Activated naive CD4-positive, alpha-beta T cell treated with anti-CD3 and anti-CD28 coated beads for 36 hours (primary cell): ENCODE measurements at regions of chr10 and their contacts with region 1.

Region 1: DNA sequence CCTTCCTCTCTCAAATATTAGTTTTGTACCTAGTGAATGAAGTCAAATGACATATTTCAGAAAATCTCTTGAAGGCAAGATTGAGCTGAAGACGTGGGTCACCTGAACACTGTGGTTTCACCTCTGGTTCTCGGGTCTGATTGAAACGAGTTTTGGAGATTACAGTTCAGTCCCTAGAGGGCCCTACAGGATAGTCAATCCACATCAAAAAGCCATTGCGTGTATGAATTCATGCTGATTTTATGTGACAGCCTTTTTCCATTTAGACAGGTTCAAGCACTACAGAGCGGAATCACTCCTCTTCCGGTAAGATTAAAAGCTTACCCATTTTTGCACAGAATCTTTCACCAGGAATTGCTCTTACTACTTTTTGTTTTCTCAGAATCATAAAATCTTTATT is 62.2 kb downstream of the VIM start:
- DNase-seq: peak; percentile 55
- H3K4me3 Mint-ChIP-seq: no peak overlapping the region
- H3K27ac Mint-ChIP-seq: peak overlapping the region; percentile 68
- H3K4me1 Mint-ChIP-seq: peaks cover 12% of the 10 kb centered on the region
- H3K27me3 Mint-ChIP-seq: peaks cover 18% of the 10 kb centered on the region

Region 2: GRCh38 chr10:17375936-17376584 is 85.8 kb after region 1 on chr10:
- CTCF ChIA-PET with region 1: interaction called, 17 read pairs
- intact Hi-C with region 1: loop called (anchors 1 kb)
- DNase-seq: peak; percentile 48
- H3K4me3 Mint-ChIP-seq: no peak overlapping the region
- H3K27ac Mint-ChIP-seq: no peak overlapping the region
- H3K4me1 Mint-ChIP-seq: no peaks in the 10 kb centered on the region
- H3K27me3 Mint-ChIP-seq: peaks cover 4% of the 10 kb centered on the region

Region 3: GRCh38 chr10:17474595-17475323 is 184.5 kb after region 1 on chr10:
- CTCF ChIA-PET with region 1: interaction called, 6 read pairs
- intact Hi-C with region 1: loop called (anchors 1 kb)
- DNase-seq: no peak
- H3K4me3 Mint-ChIP-seq: no peak overlapping the region
- H3K27ac Mint-ChIP-seq: no peak overlapping the region
- H3K4me1 Mint-ChIP-seq: peaks cover 5% of the 10 kb centered on the region
- H3K27me3 Mint-ChIP-seq: peaks cover 7% of the 10 kb centered on the region

Region 4: DNA sequence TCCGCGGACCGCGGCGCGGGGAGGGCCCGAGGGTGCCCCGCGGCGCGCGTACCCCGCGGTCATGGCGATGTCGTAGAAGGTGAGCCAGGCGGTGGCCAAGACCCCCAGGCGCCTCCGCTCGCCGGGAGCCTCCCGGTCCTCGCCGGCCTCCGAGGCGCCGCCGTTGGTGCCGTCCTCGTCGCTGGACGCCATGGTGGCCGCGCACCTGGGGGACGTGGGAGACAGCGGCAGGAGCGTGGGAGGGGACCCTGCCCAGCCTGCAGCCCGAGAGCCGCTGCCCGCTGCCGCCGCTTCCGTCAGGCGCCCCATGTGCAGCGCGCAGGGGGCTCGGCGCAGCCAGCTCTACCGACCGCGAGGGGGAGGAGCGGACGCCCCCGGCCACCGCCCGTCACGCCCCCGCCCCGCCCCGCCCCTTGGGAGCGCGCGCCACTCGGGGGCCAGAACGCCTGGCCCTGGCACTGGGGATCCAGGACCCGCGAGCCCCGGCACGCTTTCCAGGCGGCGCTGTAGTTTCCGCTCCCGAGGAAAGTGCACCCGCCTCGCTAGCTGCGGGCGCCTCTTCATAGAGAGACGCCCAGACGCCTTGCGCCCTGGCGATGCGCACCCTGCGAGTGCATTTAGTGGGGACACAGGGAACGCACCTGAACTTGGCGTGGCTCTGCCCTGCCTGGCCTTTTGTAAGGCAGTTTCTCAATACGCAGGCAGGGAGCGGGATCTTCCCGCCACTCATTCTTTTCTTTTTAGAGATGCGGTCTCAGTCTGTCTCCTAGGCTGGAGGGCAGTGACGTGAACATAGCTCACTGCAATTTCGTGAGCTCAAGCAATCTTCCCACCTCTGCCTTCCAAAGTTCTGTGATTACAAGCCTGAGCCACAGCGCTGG is 327.0 kb after region 1 on chr10 and contains the start of gene HACD1:
- CTCF ChIA-PET with region 1: no interaction called
- intact Hi-C with region 1: loop called (anchors 5 kb)
- DNase-seq: peak; percentile 64
- H3K4me3 Mint-ChIP-seq: peak within 1 kb of the TSS; percentile 82
- H3K27ac Mint-ChIP-seq: no peak within 1 kb of the TSS
- H3K4me1 Mint-ChIP-seq: peaks cover 3% of the 10 kb centered on the region
- H3K27me3 Mint-ChIP-seq: peaks cover 12% of the 10 kb centered on the region
- total RNA-seq, gene HACD1: 0.41 to 1.9 TPM

Region 5: GRCh38 chr10:18104223-18104872 is 814.1 kb after region 1 on chr10:
- CTCF ChIA-PET with region 1: no interaction called
- intact Hi-C with region 1: loop called (anchors 10 kb)
- DNase-seq: peak; percentile 63
- H3K4me3 Mint-ChIP-seq: no peak overlapping the region
- H3K27ac Mint-ChIP-seq: no peak overlapping the region
- H3K4me1 Mint-ChIP-seq: no peaks in the 10 kb centered on the region
- H3K27me3 Mint-ChIP-seq: peaks cover 5% of the 10 kb centered on the region

Region 6: GRCh38 chr10:18325889-18326531 is 1035.8 kb after region 1 on chr10:
- CTCF ChIA-PET with region 1: no interaction called
- intact Hi-C with region 1: no loop called
- DNase-seq: no peak
- H3K4me3 Mint-ChIP-seq: no peak overlapping the region
- H3K27ac Mint-ChIP-seq: no peak overlapping the region
- H3K4me1 Mint-ChIP-seq: no peaks in the 10 kb centered on the region
- H3K27me3 Mint-ChIP-seq: no peaks in the 10 kb centered on the region